Heart left ventricle (tissue), 16 donors: ENCODE measurements at regions of chr6 and their contacts with region 1.

Region 1: DNA sequence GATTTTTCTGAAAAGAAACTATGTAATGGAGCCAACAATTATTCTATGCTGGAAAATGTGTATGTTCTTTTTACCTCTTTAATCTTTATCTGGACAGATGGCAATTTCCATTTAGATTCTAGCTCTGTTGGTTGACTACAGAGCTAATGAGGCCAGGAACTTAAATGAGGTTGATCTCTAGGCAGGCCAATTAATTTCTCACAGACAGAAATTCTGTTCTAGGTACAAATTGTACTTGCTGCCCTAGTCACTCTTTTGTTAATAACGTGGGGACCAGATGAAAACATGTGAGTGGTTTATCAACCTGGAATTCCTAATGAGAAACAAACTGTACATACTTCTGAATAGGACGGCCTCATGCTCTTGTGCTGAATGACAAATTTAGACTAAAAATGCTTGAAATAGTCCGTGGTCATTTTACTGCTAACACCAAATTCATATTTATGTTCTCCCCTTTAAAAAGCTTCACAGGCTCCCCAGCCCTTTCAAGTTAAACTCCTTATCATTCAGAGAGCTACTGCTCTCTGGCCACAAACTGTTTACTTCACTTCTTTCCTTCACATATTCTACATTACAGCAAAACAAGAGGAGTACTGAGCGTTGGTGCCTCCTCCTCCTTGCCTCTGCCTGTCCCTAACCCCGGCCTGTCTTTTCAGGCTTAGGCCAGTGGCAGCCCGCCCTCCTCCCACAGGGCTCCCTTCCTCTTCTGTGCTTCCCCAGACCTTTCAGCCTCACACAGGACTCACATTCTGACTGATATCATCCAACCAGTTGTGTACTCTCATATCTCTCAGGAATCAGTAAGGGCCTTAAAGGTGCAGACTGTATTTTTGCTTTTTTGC is 41.4 kb downstream of the DTNBP1 start:
- DNase-seq: peak; percentile 58 to 72 (median 68)
- ATAC-seq: peak; percentile 81 to 95 (median 91)
- H3K4me3 ChIP-seq: no peak overlapping the region
- H3K27ac ChIP-seq: peak overlapping the region; percentile 50 to 87 (median 78)
- H3K4me1 ChIP-seq: peaks cover 0 to 40% (median 31%) of the 10 kb centered on the region in 12 donors
- H3K27me3 ChIP-seq: no peaks in the 10 kb centered on the region
- CTCF ChIP-seq: peak in 1 of 12 donors; percentile 8
- POLR2A ChIP-seq: no peak

Region 2: DNA sequence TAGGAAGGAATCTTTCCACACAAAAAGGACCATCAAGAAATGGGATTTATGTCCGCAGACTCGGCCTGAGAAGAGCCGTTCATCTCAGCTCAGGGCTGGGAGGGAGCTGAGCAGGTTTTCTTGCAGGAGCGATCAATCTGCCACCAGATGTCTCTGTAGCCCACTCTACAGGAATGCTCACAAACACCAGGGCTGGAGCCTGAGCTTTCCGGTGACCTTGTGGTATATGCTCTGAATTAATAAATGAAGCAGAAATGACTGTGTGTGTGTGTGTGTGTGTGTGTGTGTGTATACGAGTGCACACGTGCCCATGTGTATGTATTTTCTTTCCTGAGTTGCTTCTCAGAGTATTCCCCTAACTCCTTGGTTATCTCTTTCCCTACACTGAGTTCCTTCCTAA is 1491.8 kb before region 1 on chr6:
- intact Hi-C with region 1: loop called (anchors 2 to 10 kb)
- DNase-seq: peak in 4 of 5 donors; percentile 54 to 57 (median 56)
- ATAC-seq: peak; percentile 71 to 94 (median 90)
- H3K4me3 ChIP-seq: no peak overlapping the region
- H3K27ac ChIP-seq: no peak overlapping the region
- H3K4me1 ChIP-seq: peaks cover 0 to 14% (median 2%) of the 10 kb centered on the region in 12 donors
- H3K27me3 ChIP-seq: no peaks in the 10 kb centered on the region
- CTCF ChIP-seq: peak; percentile 41 to 78 (median 64)
- POLR2A ChIP-seq: no peak

Region 3: DNA sequence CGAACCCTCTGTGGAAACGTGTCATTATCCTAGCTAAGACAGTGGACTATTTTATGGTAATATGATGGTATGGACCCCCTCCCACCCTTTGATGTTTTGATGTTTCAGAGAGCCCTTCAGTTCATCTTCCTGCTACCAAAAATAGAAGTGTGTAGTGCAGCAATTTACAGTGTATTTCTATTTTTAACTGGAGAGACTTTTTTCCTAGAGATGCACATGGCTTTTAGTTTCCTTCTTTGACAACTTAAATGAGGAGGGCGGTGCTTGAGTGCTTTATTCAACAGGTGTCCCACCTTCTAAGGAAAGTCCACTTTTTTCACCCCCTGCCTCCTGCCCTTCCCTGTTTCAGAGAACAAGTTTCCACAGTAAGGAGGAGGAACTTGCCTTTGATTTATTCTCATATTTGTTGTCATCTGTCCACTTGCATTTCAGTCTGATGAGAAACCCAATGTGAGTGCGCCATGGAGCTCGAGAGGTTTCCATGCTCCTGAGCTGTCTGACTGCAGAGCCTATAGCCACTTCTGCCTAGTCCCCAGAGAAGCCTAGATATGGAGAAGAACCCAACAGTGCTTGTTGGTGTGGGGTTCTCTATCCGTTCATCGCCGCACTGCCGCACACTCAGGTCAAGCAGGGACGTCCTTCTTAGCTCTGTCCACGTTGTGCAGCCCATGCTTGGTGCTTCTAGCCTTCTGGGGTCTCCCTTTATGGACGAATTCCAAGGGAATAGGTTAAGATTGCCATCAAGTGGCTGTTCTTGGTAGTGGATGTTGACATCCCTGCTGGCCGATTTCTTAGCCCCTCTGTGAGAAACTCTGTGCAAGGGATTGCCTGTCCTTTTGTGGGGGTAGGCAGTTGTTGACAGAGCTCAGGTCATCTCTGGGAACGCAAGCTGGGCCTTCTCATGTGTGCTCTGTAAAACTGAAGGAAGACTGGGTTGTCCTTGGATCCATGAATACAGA is 231.4 kb before region 1 on chr6:
- intact Hi-C with region 1: loop called in 1 of 10 experiments (anchors 10 kb)
- DNase-seq: no peak
- ATAC-seq: peak; percentile 4 to 60 (median 53)
- H3K4me3 ChIP-seq: peak overlapping the region in 1 of 12 donors; percentile 0
- H3K27ac ChIP-seq: peak overlapping the region in 10 of 12 donors; percentile 1 to 70 (median 43)
- H3K4me1 ChIP-seq: peaks cover 0 to 68% (median 44%) of the 10 kb centered on the region in 12 donors
- H3K27me3 ChIP-seq: no peaks in the 10 kb centered on the region
- CTCF ChIP-seq: peak; percentile 42 to 78 (median 64)
- POLR2A ChIP-seq: no peak

Region 4: DNA sequence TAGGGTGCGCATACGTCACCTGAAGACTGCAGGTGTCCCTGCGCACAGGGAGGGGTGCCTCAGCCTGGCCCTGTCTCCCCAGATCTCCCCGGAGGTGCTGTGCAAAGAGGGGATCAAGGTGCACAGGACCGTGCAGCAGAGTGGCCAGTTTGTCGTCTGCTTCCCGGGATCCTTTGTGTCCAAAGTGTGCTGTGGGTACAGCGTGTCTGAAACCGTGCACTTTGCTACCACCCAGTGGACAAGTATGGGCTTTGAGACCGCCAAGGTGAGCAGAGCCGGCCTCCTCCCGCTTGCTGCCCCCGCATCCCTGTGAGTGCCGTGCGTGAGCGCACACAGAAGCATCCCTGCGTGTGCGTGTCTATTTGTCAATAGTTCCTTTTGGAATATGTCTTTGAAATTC is 109.3 kb before region 1 on chr6:
- intact Hi-C with region 1: loop called in 7 of 10 experiments (anchors 2 to 10 kb)
- DNase-seq: peak in 1 of 5 donors; percentile 61
- ATAC-seq: peak; percentile 63 to 76 (median 70)
- H3K4me3 ChIP-seq: no peak overlapping the region
- H3K27ac ChIP-seq: peak overlapping the region in 10 of 12 donors; percentile 28 to 91 (median 76)
- H3K4me1 ChIP-seq: peaks cover 0 to 43% (median 8%) of the 10 kb centered on the region in 12 donors
- H3K27me3 ChIP-seq: no peaks in the 10 kb centered on the region
- CTCF ChIP-seq: peak in 10 of 12 donors; percentile 18 to 51 (median 37)
- POLR2A ChIP-seq: no peak

Region 5: GRCh38 chr6:15551798-15552197 is 69.6 kb before region 1 on chr6:
- intact Hi-C with region 1: loop called in 1 of 10 experiments (anchors 10 kb)
- DNase-seq: peak in 3 of 5 donors; percentile 18 to 29 (median 28)
- ATAC-seq: peak; percentile 47 to 81 (median 61)
- H3K4me3 ChIP-seq: no peak overlapping the region
- H3K27ac ChIP-seq: peak overlapping the region in 6 of 12 donors; percentile 10 to 43 (median 38)
- H3K4me1 ChIP-seq: peaks cover 0 to 64% (median 25%) of the 10 kb centered on the region in 12 donors
- H3K27me3 ChIP-seq: no peaks in the 10 kb centered on the region
- CTCF ChIP-seq: no peak
- POLR2A ChIP-seq: no peak